ENCODE measurements at regions of chr2 and their contacts with region 1.

Region 1: DNA sequence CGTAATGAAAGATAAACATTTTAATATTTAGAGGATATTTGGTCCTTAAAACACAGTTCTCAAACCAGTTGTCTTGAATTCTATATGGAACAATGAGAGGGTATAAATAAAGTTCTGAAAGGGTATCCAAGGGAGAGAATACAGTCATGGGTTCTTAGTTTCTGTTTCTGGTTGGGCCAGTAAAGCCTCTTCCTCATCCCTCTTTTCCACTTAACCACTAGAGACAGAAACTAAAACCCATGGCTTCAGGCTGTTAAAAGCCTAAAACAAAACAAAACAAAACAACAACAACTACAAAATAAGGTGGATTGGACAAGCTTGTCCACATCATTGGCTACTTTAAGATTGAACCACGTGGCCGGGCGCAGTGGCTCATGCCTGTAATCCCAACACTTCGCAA is 18.8 kb downstream of the COQ10B start:
- DNase-seq: no peak
- ATAC-seq: no peak
- H3K4me3 ChIP-seq: no peak overlapping the region
- H3K4me3 Mint-ChIP-seq: no peak overlapping the region
- H3K27ac ChIP-seq: no peak overlapping the region
- H3K27ac Mint-ChIP-seq: no peak overlapping the region
- H3K4me1 ChIP-seq: no peaks in the 10 kb centered on the region
- H3K4me1 Mint-ChIP-seq: no peaks in the 10 kb centered on the region
- H3K27me3 ChIP-seq: no peaks in the 10 kb centered on the region
- H3K27me3 Mint-ChIP-seq: no peaks in the 10 kb centered on the region
- CTCF ChIP-seq: no peak

Region 2: DNA sequence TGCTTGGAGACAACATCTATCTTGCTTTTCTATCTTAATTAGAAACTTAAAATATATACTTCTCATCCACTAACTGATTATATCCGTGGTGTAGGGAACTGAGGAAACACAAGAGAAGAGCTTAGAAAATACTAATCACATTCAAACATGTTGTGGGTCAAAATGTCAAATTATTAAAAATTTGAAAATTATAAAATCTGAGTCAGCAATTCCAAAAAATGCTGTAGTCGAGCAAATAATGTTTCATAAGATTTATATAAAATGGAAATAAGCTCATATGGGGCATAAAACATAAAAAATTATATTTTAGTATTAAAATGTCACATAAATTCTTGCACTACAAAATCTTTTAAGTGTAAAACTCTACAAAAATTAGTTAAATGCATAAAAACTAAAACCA is 66.6 kb before region 1 on chr2:
- CTCF ChIA-PET with region 1: no interaction called
- POLR2A ChIA-PET with region 1: no interaction called
- intact Hi-C with region 1: loop called in 1 of 2 experiments (anchors 5 kb)
- DNase-seq: no peak
- ATAC-seq: no peak
- H3K4me3 ChIP-seq: no peak overlapping the region
- H3K4me3 Mint-ChIP-seq: no peak overlapping the region
- H3K27ac ChIP-seq: no peak overlapping the region
- H3K27ac Mint-ChIP-seq: no peak overlapping the region
- H3K4me1 ChIP-seq: no peaks in the 10 kb centered on the region
- H3K4me1 Mint-ChIP-seq: no peaks in the 10 kb centered on the region
- H3K27me3 ChIP-seq: no peaks in the 10 kb centered on the region
- H3K27me3 Mint-ChIP-seq: no peaks in the 10 kb centered on the region
- CTCF ChIP-seq: no peak